HEK293 (cell line): ENCODE measurements at regions of chr11 and their contacts with region 1.

Region 1: DNA sequence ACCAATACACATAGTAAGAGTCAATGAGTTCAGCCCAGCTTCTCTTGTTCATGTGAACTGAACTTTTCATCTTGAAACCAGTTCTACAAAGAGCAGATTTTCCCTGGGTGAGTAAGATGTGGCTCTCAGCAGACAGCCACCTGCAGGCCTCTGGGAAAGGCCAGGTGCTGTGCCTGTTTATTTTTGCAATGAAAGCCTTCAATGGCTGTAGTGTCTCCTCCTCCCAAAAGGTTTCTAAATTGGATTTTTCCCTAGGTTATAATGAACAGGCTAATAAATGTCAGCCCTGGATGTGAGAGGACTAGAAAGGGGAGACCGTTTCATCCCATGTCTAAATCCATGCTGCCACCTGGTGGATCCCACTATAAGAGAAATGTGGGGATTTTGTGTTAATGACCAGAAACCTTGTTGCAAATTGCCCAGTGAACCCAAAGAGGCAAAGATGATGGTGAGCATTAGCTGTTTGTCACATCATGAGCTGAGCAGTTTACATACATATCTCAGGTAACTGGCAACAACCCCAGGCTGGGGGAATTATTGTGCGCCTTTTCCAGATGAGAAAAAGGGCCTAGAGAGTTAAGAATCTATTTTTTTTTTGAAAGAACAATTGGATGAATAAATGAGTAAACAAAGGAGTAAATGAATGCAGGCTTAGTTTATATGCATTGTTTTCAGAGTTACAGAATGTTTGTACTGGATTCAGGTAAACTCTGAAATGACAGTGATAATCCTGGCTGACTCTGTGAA is 12.7 kb downstream of the C11orf91 start:
- H3K4me3 ChIP-seq: no peak overlapping the region
- H3K27ac ChIP-seq: no peak overlapping the region
- H3K4me1 ChIP-seq: peaks cover 3% of the 10 kb centered on the region
- CTCF ChIP-seq: peak; percentile 19; the same call in 1 of the 2 replicates

Region 2: GRCh38 chr11:33362051-33362910 is 325.6 kb before region 1 on chr11:
- CTCF ChIA-PET with region 1: interaction called, 72 read pairs
- POLR2A ChIA-PET with region 1: no interaction called
- H3K4me3 ChIP-seq: no peak overlapping the region
- H3K27ac ChIP-seq: no peak overlapping the region
- H3K4me1 ChIP-seq: no peaks in the 10 kb centered on the region
- CTCF ChIP-seq: no peak

Region 3: DNA sequence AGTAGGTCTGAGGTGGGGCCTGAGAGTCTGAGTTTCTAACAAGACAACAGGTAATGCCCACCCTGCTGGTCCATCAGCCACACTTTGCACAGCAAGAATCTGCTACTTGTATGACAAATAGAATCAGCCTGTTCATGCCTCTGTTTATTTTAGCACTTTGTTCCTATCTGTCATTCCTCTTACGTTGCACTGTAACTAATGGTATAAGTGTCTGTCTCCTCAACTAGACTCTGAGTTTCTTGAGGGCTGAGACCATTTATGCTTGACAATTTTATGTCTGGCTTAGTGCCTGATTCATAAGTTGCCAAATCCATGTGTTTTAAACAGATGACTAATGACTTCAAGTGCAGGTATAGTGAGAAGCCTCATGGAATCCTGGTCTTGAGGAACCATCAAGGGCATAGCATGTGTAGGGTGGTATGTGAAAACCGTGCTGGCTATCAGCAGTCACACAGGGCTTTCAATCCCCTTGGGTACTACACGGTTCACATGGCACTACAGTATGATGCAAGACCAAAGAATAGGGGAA is 197.0 kb before region 1 on chr11:
- CTCF ChIA-PET with region 1: no interaction called
- POLR2A ChIA-PET with region 1: no interaction called
- H3K4me3 ChIP-seq: no peak overlapping the region
- H3K27ac ChIP-seq: no peak overlapping the region
- H3K4me1 ChIP-seq: no peaks in the 10 kb centered on the region; the same call in 1 of the 2 replicates
- CTCF ChIP-seq: no peak

Region 4: DNA sequence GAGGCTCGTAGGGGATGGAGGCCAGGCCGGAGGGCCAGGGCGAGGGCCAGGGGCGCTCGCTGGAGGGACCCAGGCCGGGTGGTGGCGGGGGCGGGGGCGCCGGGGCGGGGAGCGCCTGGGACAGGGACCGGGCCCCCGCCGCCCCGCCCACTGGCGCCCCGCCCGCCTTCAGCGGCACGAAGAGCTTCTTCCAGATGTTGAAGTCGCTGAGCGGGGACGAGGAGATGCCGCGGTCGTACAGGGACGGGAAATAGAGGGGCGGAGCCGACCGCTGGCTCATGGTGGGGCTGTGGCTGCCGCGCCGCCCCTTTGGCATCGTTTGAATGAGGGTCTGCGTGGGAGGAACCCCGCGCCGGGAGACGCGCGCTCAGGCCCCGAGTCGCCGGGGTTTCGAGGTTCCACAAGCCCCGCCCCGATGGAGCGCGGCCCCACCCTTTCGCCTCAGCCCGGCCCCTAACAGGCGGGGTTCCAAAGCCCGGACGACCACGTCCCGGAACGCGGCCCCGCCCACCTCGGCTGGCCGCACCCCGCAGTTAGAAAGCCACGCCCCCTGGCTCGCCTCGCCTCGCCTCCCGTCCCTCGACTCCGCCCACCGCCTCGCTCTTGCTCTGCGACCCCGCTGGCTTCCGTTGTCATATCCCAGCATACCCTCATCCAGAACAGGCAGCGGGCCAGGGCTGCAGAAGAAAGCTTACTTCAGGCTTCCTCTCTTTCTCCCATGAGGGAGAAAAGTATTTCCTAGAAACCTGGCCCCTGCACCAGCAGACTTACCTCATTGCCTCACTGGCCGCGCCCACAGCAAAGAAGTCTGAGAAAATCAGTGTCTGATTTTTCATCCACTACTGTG is 12.7 kb after region 1 on chr11 and contains the start of gene C11orf91:
- CTCF ChIA-PET with region 1: interaction called, 6 read pairs
- POLR2A ChIA-PET with region 1: interaction called, 17 read pairs
- H3K4me3 ChIP-seq: peak within 1 kb of the TSS; percentile 62
- H3K27ac ChIP-seq: no peak within 1 kb of the TSS
- H3K4me1 ChIP-seq: no peaks in the 10 kb centered on the region
- CTCF ChIP-seq: no peak

Region 5: GRCh38 chr11:33736148-33736809 is 48.4 kb after region 1 on chr11 and contains the start of gene CD59:
- CTCF ChIA-PET with region 1: interaction called, 4 read pairs
- POLR2A ChIA-PET with region 1: interaction called, 20 read pairs
- H3K4me3 ChIP-seq: peak within 1 kb of the TSS; percentile 86
- H3K27ac ChIP-seq: peak within 1 kb of the TSS; percentile 54; the same call in 1 of the 2 replicates
- H3K4me1 ChIP-seq: no peaks in the 10 kb centered on the region
- CTCF ChIP-seq: no peak

Region 6: DNA sequence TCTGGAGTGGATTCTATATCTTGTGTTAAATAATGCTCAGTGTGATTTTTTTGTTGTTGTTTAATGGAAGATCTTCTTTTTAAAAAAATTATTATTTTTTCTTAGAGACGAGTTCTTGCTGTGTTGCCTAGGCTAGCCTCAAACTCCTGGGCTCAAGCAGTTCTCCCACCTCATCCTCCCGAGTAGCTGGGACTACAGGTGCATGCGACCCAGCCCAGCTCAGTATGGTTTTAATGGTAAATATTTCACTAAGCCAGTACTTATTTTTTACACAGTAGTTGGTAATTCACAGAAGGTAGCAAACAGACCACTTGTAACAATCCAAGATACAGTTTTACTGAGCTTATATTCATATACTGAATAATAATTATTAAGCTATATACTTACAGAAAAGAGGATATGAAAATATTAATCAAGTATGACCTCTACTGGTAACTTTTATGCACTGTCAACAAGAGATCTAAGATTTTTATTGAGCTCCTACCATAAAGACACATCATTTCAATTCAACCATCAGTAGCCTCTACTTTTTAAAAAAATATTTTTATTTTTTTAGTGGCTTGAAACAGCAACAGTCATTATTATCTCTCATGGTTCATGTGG is 54.4 kb after region 1 on chr11:
- CTCF ChIA-PET with region 1: interaction called, 13 read pairs
- POLR2A ChIA-PET with region 1: interaction called, 3 read pairs
- H3K4me3 ChIP-seq: no peak overlapping the region
- H3K27ac ChIP-seq: no peak overlapping the region
- H3K4me1 ChIP-seq: no peaks in the 10 kb centered on the region
- CTCF ChIP-seq: no peak

Region 7: GRCh38 chr11:33829433-33830141 is 141.7 kb after region 1 on chr11:
- CTCF ChIA-PET with region 1: interaction called, 11 read pairs
- POLR2A ChIA-PET with region 1: no interaction called
- H3K4me3 ChIP-seq: peak overlapping the region; percentile 31
- H3K27ac ChIP-seq: no peak overlapping the region
- H3K4me1 ChIP-seq: no peaks in the 10 kb centered on the region
- CTCF ChIP-seq: peak; percentile 64; the same call in 1 of the 2 replicates